HEK293 (cell line): ENCODE measurements at regions of chr20 and their contacts with region 1.

Region 1: GRCh38 chr20:18466894-18467730 is at the starts of genes DZANK1 and POLR3F:
- H3K4me3 ChIP-seq: peak within 1 kb of the TSS; percentile 99
- H3K27ac ChIP-seq: peak within 1 kb of the TSS; percentile 85
- H3K4me1 ChIP-seq: peaks cover 4% of the 10 kb centered on the region; the same call in 1 of the 2 replicates
- CTCF ChIP-seq: 0 out of 2 replicates have a peak, but pooled peaks have one; percentile 14

Region 2: GRCh38 chr20:18443835-18444234 is 23.3 kb before region 1 on chr20:
- CTCF ChIA-PET with region 1: no interaction called
- POLR2A ChIA-PET with region 1: interaction called, 12 read pairs
- H3K4me3 ChIP-seq: no peak overlapping the region
- H3K27ac ChIP-seq: no peak overlapping the region
- H3K4me1 ChIP-seq: peaks cover 3% of the 10 kb centered on the region; the same call in 1 of the 2 replicates
- CTCF ChIP-seq: no peak

Region 3: DNA sequence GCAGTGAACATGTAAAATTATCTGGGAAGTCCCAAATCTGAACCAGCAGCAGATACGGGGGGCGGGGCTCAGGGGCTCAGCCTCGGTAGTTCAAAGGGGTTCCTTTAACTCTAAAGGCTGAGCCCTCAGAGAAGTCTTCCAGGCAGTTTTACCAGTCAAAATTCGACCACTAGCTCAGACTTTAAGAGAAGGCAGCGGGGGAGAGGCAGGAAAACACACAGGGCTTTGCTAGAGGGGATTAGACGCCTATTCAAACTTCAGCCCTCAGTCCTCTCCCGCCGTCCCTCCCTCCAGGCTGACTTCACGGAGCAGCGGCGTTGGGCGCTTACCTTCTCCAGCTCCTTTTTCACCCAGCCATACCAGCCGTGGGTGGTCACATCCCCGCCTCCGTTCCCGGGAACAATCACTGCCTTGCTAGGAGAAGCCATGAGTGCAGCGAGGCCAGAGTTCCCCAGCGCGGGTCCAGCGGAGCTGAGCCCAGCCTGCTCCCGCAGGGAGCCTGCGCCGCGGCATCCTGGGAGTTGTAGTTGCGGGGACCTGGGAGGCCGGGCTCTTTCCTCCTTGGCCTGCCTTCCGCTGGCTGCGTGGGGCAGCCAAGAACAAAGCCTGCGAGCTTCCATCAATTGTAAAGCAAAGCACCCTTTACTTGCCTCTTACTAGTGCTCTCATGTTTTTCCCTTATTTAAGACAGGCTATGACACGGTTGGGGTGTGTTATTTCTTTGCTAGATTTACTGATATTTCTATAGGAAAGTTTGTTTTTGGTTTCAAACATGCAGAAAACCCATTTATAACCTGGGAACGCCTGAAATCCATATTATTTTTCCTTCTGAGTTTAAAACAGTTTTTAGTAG is 29.9 kb after region 1 on chr20 and contains the start of gene RBBP9:
- CTCF ChIA-PET with region 1: no interaction called
- POLR2A ChIA-PET with region 1: interaction called, 13 read pairs
- H3K4me3 ChIP-seq: peak within 1 kb of the TSS; percentile 98
- H3K27ac ChIP-seq: peak within 1 kb of the TSS; percentile 66; the same call in 1 of the 2 replicates
- H3K4me1 ChIP-seq: no peaks in the 10 kb centered on the region; the same call in 1 of the 2 replicates
- CTCF ChIP-seq: no peak; the same call in 1 of the 2 replicates